PC-9 (cell line): ENCODE measurements at regions of chr12 and their contacts with region 1.

Region 1: DNA sequence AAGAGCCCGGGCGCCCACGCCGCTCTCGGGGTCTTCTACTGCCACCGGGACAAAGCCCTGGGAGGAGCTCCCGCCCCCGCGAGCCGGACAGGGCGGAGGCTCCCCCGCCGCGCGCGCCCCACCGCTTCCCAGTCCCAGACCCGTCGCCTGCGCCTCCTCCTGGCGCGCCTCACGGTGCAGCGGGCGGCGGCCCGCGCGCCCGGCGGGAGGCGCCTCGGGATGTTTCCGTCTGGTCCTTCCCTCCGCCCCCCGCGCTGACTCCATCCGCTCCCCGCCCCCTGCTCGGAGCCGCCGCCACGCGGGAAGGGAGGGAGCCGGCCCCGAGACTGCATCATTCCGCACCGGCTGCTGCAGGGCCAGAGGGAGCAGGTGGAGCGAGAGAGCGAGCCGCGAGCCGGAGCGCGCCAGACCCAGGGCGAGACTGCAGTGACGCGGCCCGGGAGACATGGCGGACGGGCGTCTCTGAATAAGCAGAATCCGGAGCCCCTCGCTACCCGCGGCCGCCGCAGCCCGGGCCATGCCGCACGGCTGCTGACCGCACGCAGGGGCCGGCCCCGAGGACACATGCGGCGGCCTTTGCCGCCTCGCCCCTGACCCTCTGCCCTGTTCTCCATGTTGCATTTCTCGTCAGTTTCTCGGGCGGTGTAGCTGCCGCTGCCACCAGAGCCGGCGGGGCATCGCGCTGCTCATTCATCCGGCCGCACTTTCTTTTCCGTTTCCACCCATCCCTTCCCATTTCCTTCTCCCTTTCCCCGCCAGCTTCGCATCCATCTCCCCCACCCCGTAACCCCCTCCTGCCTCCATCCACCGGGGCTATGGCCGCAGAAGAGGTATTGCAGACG is at the start of gene BICD1:
- DNase-seq: peak; percentile 63 to 93
- H3K4me3 ChIP-seq: peak within 1 kb of the TSS; percentile 93
- H3K27ac ChIP-seq: peak within 1 kb of the TSS; percentile 71
- H3K4me1 ChIP-seq: peaks cover 27% of the 10 kb centered on the region
- H3K27me3 ChIP-seq: no peaks in the 10 kb centered on the region
- CTCF ChIP-seq: peak; percentile 12; the same call in 1 of the 2 replicates
- total RNA-seq, gene BICD1: 41.1 and 41.3 TPM in 2 replicates

Region 2: GRCh38 chr12:32290411-32290810 is 183.7 kb after region 1 on chr12:
- CTCF ChIA-PET with region 1: no interaction called
- POLR2A ChIA-PET with region 1: interaction called, 6 read pairs
- intact Hi-C with region 1: loop called (anchors 2 kb)
- DNase-seq: peak; percentile 80 to 92
- H3K4me3 ChIP-seq: no peak overlapping the region
- H3K27ac ChIP-seq: peak overlapping the region; percentile 52
- H3K4me1 ChIP-seq: peaks cover 21% of the 10 kb centered on the region
- H3K27me3 ChIP-seq: no peaks in the 10 kb centered on the region
- CTCF ChIP-seq: no peak

Region 3: DNA sequence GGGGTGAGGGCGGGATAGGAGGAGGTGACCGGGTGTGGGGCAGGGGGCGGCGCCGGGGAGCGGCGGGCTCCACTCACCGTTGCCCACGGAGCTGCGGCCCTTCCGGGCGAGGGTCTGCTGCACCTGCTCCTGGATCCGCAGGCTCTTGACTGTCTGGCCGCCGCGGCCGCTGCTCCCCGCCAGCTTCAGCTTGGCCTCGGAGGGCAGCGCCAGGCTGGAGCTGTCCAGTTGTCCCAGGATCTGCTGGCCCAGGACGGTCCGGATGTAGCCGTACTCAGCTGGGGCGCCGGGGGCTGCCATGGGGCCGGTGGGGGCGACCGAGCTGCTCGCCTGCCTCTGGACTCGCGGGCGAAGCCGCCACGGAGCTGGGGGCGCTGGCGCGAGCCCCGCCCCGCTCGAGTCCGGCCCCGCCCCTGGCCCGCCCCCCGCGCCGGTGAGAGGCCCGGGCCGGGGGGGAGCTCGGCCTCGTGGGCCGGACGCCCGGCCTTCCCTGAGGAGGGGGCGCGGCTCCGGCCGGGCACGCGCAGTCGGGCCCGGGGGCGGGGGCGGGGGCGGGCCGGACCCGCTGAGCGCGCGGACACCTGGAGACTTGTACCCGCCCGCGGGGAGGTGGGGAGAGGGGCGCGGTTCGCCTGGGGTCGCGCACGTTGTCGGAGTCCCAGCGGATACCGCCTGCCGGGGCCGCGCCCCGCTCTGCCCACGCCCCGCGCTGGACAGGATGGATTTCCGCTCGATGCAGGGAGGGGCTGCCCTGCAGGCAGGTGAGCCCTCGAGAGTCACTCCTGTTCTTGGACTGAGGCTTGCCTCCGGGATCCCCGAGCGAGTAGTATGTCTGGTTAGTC is 789.9 kb after region 1 on chr12 and contains the start of gene PKP2:
- CTCF ChIA-PET with region 1: no interaction called
- POLR2A ChIA-PET with region 1: no interaction called
- intact Hi-C with region 1: no loop called
- DNase-seq: peak; percentile 98 to 100
- H3K4me3 ChIP-seq: peak within 1 kb of the TSS; percentile 93
- H3K27ac ChIP-seq: peak within 1 kb of the TSS; percentile 74
- H3K4me1 ChIP-seq: peaks cover 66% of the 10 kb centered on the region
- H3K27me3 ChIP-seq: no peaks in the 10 kb centered on the region
- CTCF ChIP-seq: no peak
- total RNA-seq, gene PKP2: 88.1 and 88.7 TPM in 2 replicates